CD14-positive monocyte (primary cell): ENCODE measurements at regions of chr18 and their contacts with region 1.

Region 1: GRCh38 chr18:11851146-11851805 is at the start of gene CHMP1B:
- DNase-seq: peak; percentile 96 to 98 (median 97)
- H3K4me3 ChIP-seq: peak within 1 kb of the TSS; percentile 81 to 96 (median 87)
- H3K4me3 Mint-ChIP-seq: peak within 1 kb of the TSS; percentile 100
- H3K27ac ChIP-seq: peak within 1 kb of the TSS; percentile 93 to 98
- H3K27ac Mint-ChIP-seq: peak within 1 kb of the TSS; percentile 99 to 100 (median 100)
- H3K4me1 ChIP-seq: peaks cover 28 to 51% of the 10 kb centered on the region in 2 donors
- H3K4me1 Mint-ChIP-seq: peaks cover 40% of the 10 kb centered on the region
- H3K27me3 ChIP-seq: no peaks in the 10 kb centered on the region
- H3K27me3 Mint-ChIP-seq: peaks cover 3 to 14% (median 4%) of the 10 kb centered on the region in 3 donors
- CTCF ChIP-seq: no peak
- polyA plus RNA-seq, gene CHMP1B: 95.2 to 182 (median 105) TPM

Region 2: DNA sequence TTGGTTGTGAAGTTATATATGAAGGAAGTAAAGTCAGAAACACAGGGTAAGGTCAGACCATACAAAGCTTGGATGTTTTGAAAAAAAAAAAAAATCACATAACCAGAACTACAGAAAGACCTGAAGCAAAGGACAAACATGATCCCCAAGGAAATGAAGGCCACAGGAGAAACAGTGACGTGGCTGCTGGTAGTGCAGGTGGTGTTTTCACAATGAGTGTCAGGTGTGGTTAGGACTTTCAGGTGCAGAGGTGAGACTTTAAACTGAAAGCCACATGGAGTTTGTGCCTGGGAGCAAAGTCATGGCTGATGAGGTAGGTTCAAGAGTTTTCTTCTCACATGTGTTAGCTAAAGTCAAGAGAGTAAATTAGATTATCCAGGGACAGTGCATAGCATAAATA is 972.6 kb before region 1 on chr18:
- intact Hi-C with region 1: no loop called
- DNase-seq: no peak
- H3K4me3 ChIP-seq: no peak overlapping the region
- H3K4me3 Mint-ChIP-seq: no peak overlapping the region
- H3K27ac ChIP-seq: no peak overlapping the region
- H3K27ac Mint-ChIP-seq: no peak overlapping the region
- H3K4me1 ChIP-seq: no peaks in the 10 kb centered on the region
- H3K4me1 Mint-ChIP-seq: no peaks in the 10 kb centered on the region
- H3K27me3 ChIP-seq: no peaks in the 10 kb centered on the region
- H3K27me3 Mint-ChIP-seq: peaks cover 0 to 3% (median 0%) of the 10 kb centered on the region in 3 donors
- CTCF ChIP-seq: no peak

Region 3: DNA sequence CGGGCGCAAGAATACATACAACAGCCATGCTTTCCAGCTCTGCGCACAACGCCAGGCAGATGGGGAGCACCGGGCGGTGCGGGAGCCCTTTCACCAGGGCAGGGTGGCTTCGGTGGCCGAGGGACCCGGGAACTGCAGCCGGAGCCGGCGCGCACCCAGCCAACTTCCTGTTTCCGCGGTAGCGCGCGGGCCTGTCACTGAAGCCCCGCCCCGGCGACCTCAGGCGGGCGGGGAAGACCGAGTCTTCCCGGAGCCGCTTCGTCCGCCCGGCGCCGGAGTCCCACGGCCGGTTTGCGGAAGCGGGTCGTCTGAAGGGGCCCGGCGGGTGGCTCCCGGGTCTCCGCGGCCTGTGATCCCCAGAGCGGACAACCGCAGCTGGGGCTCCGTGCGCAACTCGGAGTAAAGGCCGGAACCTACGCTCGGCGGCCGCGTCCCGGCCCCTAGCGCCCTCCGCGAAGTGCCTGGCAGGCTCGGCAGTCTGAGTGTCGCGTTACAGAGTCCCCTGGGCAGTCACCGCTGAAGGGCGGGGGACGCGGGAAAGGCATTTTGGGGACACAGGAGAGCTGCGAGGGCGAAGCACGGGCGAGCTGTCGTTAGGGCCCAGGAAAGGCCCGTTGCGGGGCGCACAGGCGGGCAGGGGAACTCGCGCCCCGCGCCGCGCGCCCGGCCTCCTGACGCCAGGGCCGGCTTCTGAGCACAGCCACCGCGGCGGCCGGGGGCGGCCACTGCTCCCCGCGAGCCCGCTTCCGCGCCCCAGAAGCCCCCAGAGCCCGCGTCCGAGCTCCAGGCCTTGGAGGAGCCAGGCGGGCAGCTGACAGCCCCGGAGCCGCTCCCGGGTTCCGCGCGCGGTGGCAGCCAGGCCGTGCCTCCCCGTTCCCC is 57.1 kb after region 1 on chr18 and contains the start of gene MPPE1:
- intact Hi-C with region 1: loop called (anchors 2 to 10 kb)
- DNase-seq: peak; percentile 92 to 93 (median 92)
- H3K4me3 ChIP-seq: peak within 1 kb of the TSS; percentile 74 to 97 (median 92)
- H3K4me3 Mint-ChIP-seq: peak within 1 kb of the TSS; percentile 86 to 94
- H3K27ac ChIP-seq: peak within 1 kb of the TSS; percentile 98 to 99
- H3K27ac Mint-ChIP-seq: peak within 1 kb of the TSS; percentile 91 to 98 (median 96)
- H3K4me1 ChIP-seq: peaks cover 27 to 31% of the 10 kb centered on the region in 2 donors
- H3K4me1 Mint-ChIP-seq: peaks cover 26% of the 10 kb centered on the region
- H3K27me3 ChIP-seq: no peaks in the 10 kb centered on the region
- H3K27me3 Mint-ChIP-seq: no peaks in the 10 kb centered on the region
- CTCF ChIP-seq: no peak
- polyA plus RNA-seq, gene MPPE1: 53.4 to 96.8 (median 92.3) TPM